ENCODE measurements at regions of chr12 and their contacts with region 1.

Region 1: DNA sequence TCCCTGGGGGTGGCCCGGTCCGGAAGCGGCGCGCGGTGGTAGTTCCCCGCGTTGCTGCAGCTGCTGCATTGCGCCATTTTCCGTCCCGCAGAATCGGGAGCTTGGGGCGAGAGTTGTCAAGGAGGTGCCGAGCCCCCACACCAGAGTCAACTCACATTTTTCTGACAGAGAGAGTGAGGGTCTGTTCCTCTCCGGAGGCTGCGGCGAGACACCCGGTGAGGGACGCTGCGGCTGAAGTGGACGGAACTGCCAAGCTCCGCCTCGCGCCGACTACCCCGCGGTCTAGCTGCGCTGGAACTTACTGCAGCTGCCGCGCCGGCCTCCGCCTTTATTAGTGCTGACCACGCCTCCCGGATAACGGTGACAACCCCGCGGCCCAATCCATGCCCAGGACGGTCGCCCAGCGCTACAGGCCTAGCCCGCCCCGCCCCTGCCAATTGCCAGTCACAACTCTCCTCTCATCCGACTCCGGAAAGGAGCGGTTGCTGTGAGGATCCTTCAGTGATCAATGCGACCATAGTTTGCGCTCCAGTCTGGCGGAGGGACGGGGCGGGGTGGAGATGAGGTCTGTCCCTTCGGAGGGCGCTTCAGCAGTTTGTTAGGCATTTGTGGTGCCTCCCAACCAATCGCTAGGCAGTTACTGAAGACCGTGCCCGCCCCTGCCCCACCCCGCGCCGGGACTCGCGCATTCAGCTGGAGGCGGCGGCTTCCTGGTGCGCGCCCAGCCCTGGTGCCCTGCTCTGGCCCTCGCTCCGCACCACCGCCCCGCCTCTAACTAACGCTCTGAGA is at the start of gene VAMP1:
- DNase-seq: peak; percentile 99
- H3K4me3 Mint-ChIP-seq: peak within 1 kb of the TSS; percentile 88
- H3K27ac Mint-ChIP-seq: peak within 1 kb of the TSS; percentile 89
- H3K4me1 Mint-ChIP-seq: peaks cover 51% of the 10 kb centered on the region
- H3K27me3 Mint-ChIP-seq: no peaks in the 10 kb centered on the region
- total RNA-seq, gene VAMP1: 27.7 to 30.2 TPM

Region 2: DNA sequence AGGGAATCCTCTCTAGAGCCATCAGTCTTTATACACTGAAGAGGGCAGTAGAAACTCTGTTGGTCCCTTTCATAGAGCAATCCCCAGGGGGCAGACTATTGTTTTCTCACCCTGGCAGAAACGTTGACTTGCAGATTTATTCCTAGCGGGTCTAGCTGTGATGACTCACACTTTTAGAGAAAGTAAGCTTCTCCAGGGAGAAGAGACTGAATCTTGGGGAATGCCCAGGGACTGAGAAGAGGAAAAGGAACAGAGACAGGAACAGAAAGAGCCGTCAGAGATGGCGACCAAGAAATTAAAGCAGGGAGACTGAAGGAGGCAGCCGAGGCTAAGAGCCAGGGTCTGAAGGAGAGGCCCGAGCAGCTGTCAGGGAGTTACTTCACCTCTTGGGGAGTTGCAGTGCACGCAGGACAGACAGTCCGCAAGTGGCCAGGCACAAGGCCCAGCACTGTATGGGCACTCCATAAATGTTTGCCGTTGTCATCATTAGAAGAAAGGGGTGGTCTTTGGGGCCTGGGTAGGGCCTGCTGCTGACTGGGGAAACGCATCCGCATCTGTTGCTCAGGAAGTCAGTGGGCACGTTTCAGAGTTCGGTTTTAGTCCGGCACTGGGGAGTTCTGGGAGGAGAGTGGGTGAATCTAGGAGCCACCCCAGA is 147.1 kb before region 1 on chr12:
- CTCF ChIA-PET with region 1: interaction called, 14 read pairs
- POLR2A ChIA-PET with region 1: no interaction called
- intact Hi-C with region 1: no loop called
- DNase-seq: peak; percentile 58
- H3K4me3 Mint-ChIP-seq: peak overlapping the region; percentile 63
- H3K27ac Mint-ChIP-seq: peak overlapping the region; percentile 88
- H3K4me1 Mint-ChIP-seq: peaks cover 34% of the 10 kb centered on the region
- H3K27me3 Mint-ChIP-seq: no peaks in the 10 kb centered on the region

Region 3: DNA sequence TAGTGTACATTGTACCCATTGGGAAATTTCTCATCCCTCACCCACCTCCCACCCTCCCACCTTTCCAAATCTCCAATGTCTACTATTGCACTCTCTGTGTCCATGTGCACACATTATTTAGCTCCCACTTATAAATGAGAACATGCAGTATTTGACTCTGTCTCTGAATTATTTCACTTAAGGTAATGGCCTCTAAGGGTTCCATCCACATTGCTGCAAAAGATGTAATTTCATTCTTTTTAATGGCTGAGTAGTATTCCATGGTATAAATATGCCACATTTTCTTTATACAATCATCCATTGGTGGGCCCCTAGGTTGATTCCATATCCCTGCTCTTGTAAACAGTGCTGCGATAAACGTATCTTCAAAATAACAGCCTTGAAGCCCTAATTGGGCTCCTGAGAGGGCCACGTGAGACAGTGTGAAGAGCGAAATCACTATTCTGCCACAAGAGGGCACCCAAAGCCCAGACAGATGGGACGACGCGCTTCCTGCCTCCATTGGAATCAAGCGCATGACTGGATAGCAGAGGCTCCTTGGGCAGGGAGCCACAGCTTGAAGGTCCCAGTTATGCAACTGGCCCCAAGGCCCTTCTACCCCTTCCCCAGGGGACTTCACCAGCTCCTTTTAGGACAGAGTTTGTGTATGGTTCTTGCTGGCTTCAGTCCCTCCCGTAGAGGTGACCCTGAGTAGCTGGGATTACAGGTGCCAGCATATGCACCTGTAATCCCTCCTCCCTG is 47.1 kb before region 1 on chr12:
- CTCF ChIA-PET with region 1: interaction called, 288 read pairs
- POLR2A ChIA-PET with region 1: interaction called, 71 read pairs
- intact Hi-C with region 1: loop called (anchors 1 kb)
- DNase-seq: peak; percentile 86
- H3K4me3 Mint-ChIP-seq: no peak overlapping the region
- H3K27ac Mint-ChIP-seq: peak overlapping the region; percentile 69
- H3K4me1 Mint-ChIP-seq: peaks cover 43% of the 10 kb centered on the region
- H3K27me3 Mint-ChIP-seq: peaks cover 3% of the 10 kb centered on the region

Region 4: DNA sequence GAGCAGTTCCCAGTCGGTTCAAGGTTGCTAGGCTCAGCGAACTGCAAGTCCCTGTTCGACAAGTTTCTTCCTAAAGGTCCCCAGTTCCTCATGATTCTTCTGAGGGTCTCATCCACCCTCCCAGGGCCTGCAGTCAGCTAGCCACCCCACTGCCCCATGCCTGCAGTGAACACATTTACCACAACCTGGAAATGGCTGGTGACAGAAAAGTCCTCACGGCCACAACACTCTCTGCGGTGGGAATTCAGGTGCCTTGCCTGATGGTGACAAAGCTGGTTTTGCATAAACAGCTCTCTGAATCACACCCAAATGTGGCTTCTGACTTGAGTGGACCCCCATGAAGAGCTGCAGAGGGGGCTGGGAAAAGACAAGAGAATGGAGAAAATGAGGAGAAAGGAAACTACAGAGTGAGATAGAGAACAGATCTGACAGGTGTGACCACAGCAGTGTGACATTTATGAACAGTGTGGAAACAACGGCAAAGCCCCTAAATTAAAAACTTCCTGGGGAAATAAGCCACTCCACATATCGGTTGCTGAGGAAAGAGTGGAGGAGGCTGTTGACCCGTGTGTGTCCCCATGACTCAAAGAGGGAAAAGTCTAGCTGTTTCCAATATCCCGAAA is 27.1 kb before region 1 on chr12:
- CTCF ChIA-PET with region 1: interaction called, 37 read pairs
- POLR2A ChIA-PET with region 1: interaction called, 26 read pairs
- intact Hi-C with region 1: no loop called
- DNase-seq: peak; percentile 75
- H3K4me3 Mint-ChIP-seq: peak overlapping the region; percentile 91
- H3K27ac Mint-ChIP-seq: peak overlapping the region; percentile 98
- H3K4me1 Mint-ChIP-seq: peaks cover 69% of the 10 kb centered on the region
- H3K27me3 Mint-ChIP-seq: no peaks in the 10 kb centered on the region

Region 5: GRCh38 chr12:6493497-6494257 is 23.1 kb after region 1 on chr12 and contains the start of gene NCAPD2:
- CTCF ChIA-PET with region 1: interaction called, 11 read pairs
- POLR2A ChIA-PET with region 1: interaction called, 47 read pairs
- intact Hi-C with region 1: loop called (anchors 1 kb)
- DNase-seq: peak; percentile 98
- H3K4me3 Mint-ChIP-seq: peak within 1 kb of the TSS; percentile 94
- H3K27ac Mint-ChIP-seq: peak within 1 kb of the TSS; percentile 100
- H3K4me1 Mint-ChIP-seq: peaks cover 38% of the 10 kb centered on the region
- H3K27me3 Mint-ChIP-seq: no peaks in the 10 kb centered on the region
- total RNA-seq, gene NCAPD2: 192 to 196 TPM

Region 6: GRCh38 chr12:6540181-6540877 is 69.8 kb after region 1 on chr12:
- CTCF ChIA-PET with region 1: interaction called, 11 read pairs
- POLR2A ChIA-PET with region 1: interaction called, 54 read pairs
- intact Hi-C with region 1: no loop called
- DNase-seq: peak; percentile 73
- H3K4me3 Mint-ChIP-seq: peak overlapping the region; percentile 51
- H3K27ac Mint-ChIP-seq: peak overlapping the region; percentile 81
- H3K4me1 Mint-ChIP-seq: peaks cover 58% of the 10 kb centered on the region
- H3K27me3 Mint-ChIP-seq: no peaks in the 10 kb centered on the region

Region 7: GRCh38 chr12:6752921-6753771 is 282.6 kb after region 1 on chr12 and contains the start of gene MLF2:
- CTCF ChIA-PET with region 1: interaction called, 3 read pairs
- POLR2A ChIA-PET with region 1: no interaction called
- intact Hi-C with region 1: loop called (anchors 1 kb)
- DNase-seq: peak; percentile 99
- H3K4me3 Mint-ChIP-seq: peak within 1 kb of the TSS; percentile 93
- H3K27ac Mint-ChIP-seq: peak within 1 kb of the TSS; percentile 96
- H3K4me1 Mint-ChIP-seq: peaks cover 24% of the 10 kb centered on the region
- H3K27me3 Mint-ChIP-seq: no peaks in the 10 kb centered on the region
- total RNA-seq, gene MLF2: 140 to 141 TPM

Measured in activated CD4-positive, alpha-beta memory T cell treated with anti-CD3 and anti-CD28 coated beads for 36 hours (primary cell).